Activated CD8-positive, alpha-beta T cell treated with anti-CD3 and anti-CD28 coated beads, Interleukin-2, amount 10 ng/mL, durations not matched to agents 7 days and 5 days (primary cell): ENCODE measurements at regions of chr4 and their contacts with region 1.

Region 1: GRCh38 chr4:87006676-87007527 is 72.1 kb downstream of the AFF1 start:
- DNase-seq: peak; percentile 92
- ATAC-seq: peak; percentile 87
- H3K4me3 Mint-ChIP-seq: peak overlapping the region; percentile 98
- H3K27ac Mint-ChIP-seq: peak overlapping the region; percentile 98
- H3K4me1 Mint-ChIP-seq: peaks cover 50% of the 10 kb centered on the region
- H3K27me3 Mint-ChIP-seq: no peaks in the 10 kb centered on the region

Region 2: GRCh38 chr4:86934771-86935565 is 71.9 kb before region 1 on chr4 and contains the start of gene AFF1:
- CTCF ChIA-PET with region 1: interaction called, 40 read pairs
- POLR2A ChIA-PET with region 1: interaction called, 209 read pairs
- DNase-seq: peak; percentile 92
- ATAC-seq: peak; percentile 76
- H3K4me3 Mint-ChIP-seq: peak within 1 kb of the TSS; percentile 88
- H3K27ac Mint-ChIP-seq: peak within 1 kb of the TSS; percentile 92
- H3K4me1 Mint-ChIP-seq: peaks cover 47% of the 10 kb centered on the region
- H3K27me3 Mint-ChIP-seq: no peaks in the 10 kb centered on the region
- total RNA-seq, gene AFF1: 47.8 to 51.6 TPM

Region 3: GRCh38 chr4:86977621-86978184 is 29.2 kb before region 1 on chr4:
- CTCF ChIA-PET with region 1: no interaction called
- POLR2A ChIA-PET with region 1: interaction called, 10 read pairs
- DNase-seq: no peak
- ATAC-seq: peak; percentile 50
- H3K4me3 Mint-ChIP-seq: no peak overlapping the region
- H3K27ac Mint-ChIP-seq: no peak overlapping the region
- H3K4me1 Mint-ChIP-seq: peaks cover 51% of the 10 kb centered on the region
- H3K27me3 Mint-ChIP-seq: no peaks in the 10 kb centered on the region

Region 4: GRCh38 chr4:87017580-87018342 is 10.9 kb after region 1 on chr4:
- CTCF ChIA-PET with region 1: no interaction called
- POLR2A ChIA-PET with region 1: interaction called, 14 read pairs
- DNase-seq: no peak
- ATAC-seq: no peak
- H3K4me3 Mint-ChIP-seq: no peak overlapping the region
- H3K27ac Mint-ChIP-seq: peak overlapping the region; percentile 48
- H3K4me1 Mint-ChIP-seq: peaks cover 71% of the 10 kb centered on the region
- H3K27me3 Mint-ChIP-seq: no peaks in the 10 kb centered on the region

Region 5: DNA sequence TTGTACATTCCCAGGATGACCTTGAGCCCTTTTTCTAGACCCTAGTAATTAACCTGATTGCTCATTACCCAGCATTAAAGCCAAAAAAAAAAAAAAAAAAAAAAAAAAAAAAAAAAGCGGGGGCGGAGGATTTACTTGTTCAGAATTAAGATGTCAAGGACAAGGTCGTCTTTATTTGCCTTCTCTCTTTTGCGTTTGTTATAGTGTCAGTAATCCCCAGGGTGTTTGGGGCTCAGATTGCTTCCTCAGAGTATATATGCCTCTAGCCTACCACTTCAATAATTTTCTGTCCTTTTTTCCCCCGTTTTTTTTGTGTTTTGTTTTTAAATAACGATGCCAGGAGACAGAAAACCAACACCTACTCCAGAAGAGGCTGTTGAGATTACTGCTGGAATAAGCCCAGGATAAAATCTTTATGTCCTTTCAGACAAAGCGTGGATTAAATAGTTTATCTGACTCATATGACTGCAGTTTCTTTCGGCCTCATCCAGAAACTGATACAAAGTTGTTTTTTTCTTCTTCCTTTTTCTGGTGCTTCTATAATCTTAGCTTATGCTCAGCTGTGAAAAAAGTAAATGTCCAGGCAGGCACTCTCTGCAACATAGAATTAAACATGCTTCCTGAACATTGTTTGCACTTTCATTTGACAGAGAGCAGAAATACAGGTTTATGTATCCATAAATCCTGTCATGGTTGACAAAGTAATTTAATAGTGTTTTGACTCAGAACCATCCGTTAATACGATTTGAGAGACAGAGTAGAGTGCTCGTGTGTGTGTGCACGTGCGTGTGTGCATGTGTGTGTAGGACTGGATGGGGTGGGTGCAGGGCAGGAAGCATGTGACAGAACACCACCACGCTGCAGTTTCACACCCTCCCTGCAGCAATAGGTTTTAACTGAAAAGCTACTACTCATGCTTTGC is 66.6 kb after region 1 on chr4:
- CTCF ChIA-PET with region 1: no interaction called
- POLR2A ChIA-PET with region 1: interaction called, 10 read pairs
- DNase-seq: peak; percentile 78
- ATAC-seq: peak; percentile 94
- H3K4me3 Mint-ChIP-seq: peak overlapping the region; percentile 44
- H3K27ac Mint-ChIP-seq: peak overlapping the region; percentile 57
- H3K4me1 Mint-ChIP-seq: peaks cover 26% of the 10 kb centered on the region
- H3K27me3 Mint-ChIP-seq: no peaks in the 10 kb centered on the region